ENCODE measurements at regions of chr21 and their contacts with region 1.

Region 1: GRCh38 chr21:36692835-36693488 is 6.0 kb upstream of the SIM2 start:
- DNase-seq: peak in 1 of 2 experiments; percentile 83
- H3K4me3 ChIP-seq: peak overlapping the region in 1 of 4 experiments; percentile 54; a peak in 3 of 8 replicates
- H3K27ac ChIP-seq: no peak overlapping the region
- H3K4me1 ChIP-seq: peaks cover 5 to 32% (median 20%) of the 10 kb centered on the region in 4 experiments
- H3K27me3 ChIP-seq: peaks cover 85 to 89% (median 88%) of the 10 kb centered on the region in 4 experiments
- CTCF ChIP-seq: peak in 2 of 3 experiments; percentile 60 to 65; a peak in 3 of 4 replicates
- EP300 ChIP-seq: no peak
- POLR2A ChIP-seq: no peak
- RAD21 ChIP-seq: peak; percentile 58 to 59

Region 2: GRCh38 chr21:36706951-36707762 is 14.2 kb after region 1 on chr21:
- CTCF ChIA-PET with region 1: interaction called, 19 read pairs
- POLR2A ChIA-PET with region 1: interaction called, 15 read pairs
- DNase-seq: peak in 1 of 2 experiments; percentile 64
- H3K4me3 ChIP-seq: peak overlapping the region in 2 of 4 experiments; percentile 0 to 57; a peak in 2 of 8 replicates
- H3K27ac ChIP-seq: no peak overlapping the region
- H3K4me1 ChIP-seq: peaks cover 0 to 41% (median 32%) of the 10 kb centered on the region in 4 experiments; a peak in 6 of 7 replicates
- H3K27me3 ChIP-seq: peaks cover 76 to 98% (median 85%) of the 10 kb centered on the region in 4 experiments
- CTCF ChIP-seq: no peak
- EP300 ChIP-seq: no peak
- POLR2A ChIP-seq: no peak
- RAD21 ChIP-seq: peak; percentile 2 to 6; a peak in 1 of 4 replicates

Measured in H1 (cell line).